ENCODE measurements at regions of chr6 and their contacts with region 1.

Region 1: GRCh38 chr6:10800829-10801535 is 37.4 kb downstream of the MAK start:
- DNase-seq: peak; percentile 58
- H3K4me3 Mint-ChIP-seq: no peak overlapping the region
- H3K27ac Mint-ChIP-seq: no peak overlapping the region
- H3K4me1 Mint-ChIP-seq: peaks cover 8% of the 10 kb centered on the region
- H3K27me3 Mint-ChIP-seq: no peaks in the 10 kb centered on the region
- CTCF ChIP-seq: peak; percentile 75

Region 2: GRCh38 chr6:10478187-10479040 is 322.6 kb before region 1 on chr6:
- CTCF ChIA-PET with region 1: interaction called, 12 read pairs
- intact Hi-C with region 1: loop called (anchors 1 kb)
- DNase-seq: peak; percentile 7
- H3K4me3 Mint-ChIP-seq: no peak overlapping the region
- H3K27ac Mint-ChIP-seq: no peak overlapping the region
- H3K4me1 Mint-ChIP-seq: peaks cover 12% of the 10 kb centered on the region
- H3K27me3 Mint-ChIP-seq: no peaks in the 10 kb centered on the region
- CTCF ChIP-seq: peak; percentile 48

Region 3: GRCh38 chr6:10510592-10511367 is 290.2 kb before region 1 on chr6:
- CTCF ChIA-PET with region 1: interaction called, 4 read pairs
- intact Hi-C with region 1: loop called (anchors 1 kb)
- DNase-seq: peak; percentile 62
- H3K4me3 Mint-ChIP-seq: no peak overlapping the region
- H3K27ac Mint-ChIP-seq: no peak overlapping the region
- H3K4me1 Mint-ChIP-seq: peaks cover 18% of the 10 kb centered on the region
- H3K27me3 Mint-ChIP-seq: no peaks in the 10 kb centered on the region
- CTCF ChIP-seq: peak; percentile 32

Region 4: GRCh38 chr6:10694302-10695085 is 106.5 kb before region 1 on chr6 and contains the starts of genes C6orf52 and PAK1IP1:
- CTCF ChIA-PET with region 1: interaction called, 4 read pairs
- intact Hi-C with region 1: loop called (anchors 10 kb)
- DNase-seq: peak; percentile 81
- H3K4me3 Mint-ChIP-seq: peak within 1 kb of the TSS; percentile 93
- H3K27ac Mint-ChIP-seq: peak within 1 kb of the TSS; percentile 100
- H3K4me1 Mint-ChIP-seq: no peaks in the 10 kb centered on the region
- H3K27me3 Mint-ChIP-seq: no peaks in the 10 kb centered on the region
- CTCF ChIP-seq: no peak
- total RNA-seq, gene C6orf52: not detected in 2 replicates
- total RNA-seq, gene PAK1IP1: 14.3 and 15.8 TPM in 2 replicates

Measured in Calu3 (cell line).